ENCODE measurements at regions of chr20 and their contacts with region 1.

Region 1: GRCh38 chr20:38805502-38805957 is at the start of gene PPP1R16B:
- DNase-seq: peak; percentile 75
- ATAC-seq: peak; percentile 72
- total RNA-seq, gene PPP1R16B: 9.0 TPM

Region 2: GRCh38 chr20:38766071-38766470 is 39.5 kb before region 1 on chr20:
- intact Hi-C with region 1: no loop called
- DNase-seq: no peak
- ATAC-seq: no peak

Region 3: GRCh38 chr20:38875175-38875993 is 69.9 kb after region 1 on chr20:
- intact Hi-C with region 1: loop called (anchors 2 kb)
- DNase-seq: no peak
- ATAC-seq: peak; percentile 23

Region 4: GRCh38 chr20:38893565-38894090 is 88.1 kb after region 1 on chr20:
- intact Hi-C with region 1: loop called (anchors 5 kb)
- DNase-seq: peak; percentile 87
- ATAC-seq: peak; percentile 79

Measured in Right ventricle myocardium inferior (tissue), 1 donor.